ENCODE measurements at regions of chr15 and their contacts with region 1.

Region 1: DNA sequence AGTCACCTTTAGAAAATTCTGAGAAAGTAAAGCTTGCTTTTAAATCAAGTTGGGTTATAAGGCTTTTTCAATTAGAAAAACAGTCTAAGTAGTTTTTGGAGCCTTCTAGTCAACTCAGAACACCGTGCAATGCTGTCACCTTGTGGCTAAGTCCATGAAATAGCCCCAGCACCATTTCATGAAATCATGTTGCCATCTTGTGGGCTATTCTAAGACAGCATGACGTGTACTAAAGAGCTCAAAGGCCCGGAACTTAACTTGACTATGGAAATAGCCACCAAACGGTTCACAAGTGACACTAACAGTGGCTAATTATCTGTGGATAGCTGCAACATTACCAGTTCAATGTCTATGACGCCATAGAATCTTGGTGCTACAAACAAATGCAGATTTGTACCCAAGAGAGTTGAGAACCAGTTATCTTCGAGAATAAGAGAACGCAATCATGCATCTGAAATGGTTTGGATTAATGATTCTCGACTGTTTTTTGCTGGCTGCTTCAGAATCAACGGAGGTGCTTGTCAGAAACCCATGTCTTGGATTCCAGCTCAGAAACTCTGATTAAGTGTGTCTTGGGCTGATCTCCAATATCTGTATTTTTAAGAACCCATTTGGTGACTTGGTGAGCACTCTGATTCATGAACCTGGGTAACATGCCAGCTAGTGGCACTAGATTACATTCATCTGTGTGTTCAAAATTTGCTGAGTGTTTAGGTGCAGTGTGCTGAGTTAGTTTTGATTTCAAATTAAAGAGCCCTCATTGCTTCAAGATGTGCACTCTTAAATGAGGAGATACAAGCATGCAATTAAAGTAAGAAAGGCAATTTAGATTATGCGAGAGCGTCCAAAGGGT is 111.2 kb upstream of the MCTP2 start:
- DNase-seq: peak; percentile 68
- ATAC-seq: peak; percentile 100
- H3K4me3 Mint-ChIP-seq: no peak overlapping the region
- H3K27ac Mint-ChIP-seq: no peak overlapping the region
- H3K4me1 Mint-ChIP-seq: no peaks in the 10 kb centered on the region
- H3K27me3 Mint-ChIP-seq: no peaks in the 10 kb centered on the region

Region 2: GRCh38 chr15:92797168-92797951 is 1322.8 kb before region 1 on chr15:
- CTCF ChIA-PET with region 1: interaction called, 3 read pairs
- POLR2A ChIA-PET with region 1: no interaction called
- intact Hi-C with region 1: loop called in 1 of 2 experiments (anchors 10 kb)
- DNase-seq: no peak
- ATAC-seq: peak; percentile 90
- H3K4me3 Mint-ChIP-seq: no peak overlapping the region
- H3K27ac Mint-ChIP-seq: peak overlapping the region; percentile 65
- H3K4me1 Mint-ChIP-seq: peaks cover 8% of the 10 kb centered on the region
- H3K27me3 Mint-ChIP-seq: no peaks in the 10 kb centered on the region

Region 3: DNA sequence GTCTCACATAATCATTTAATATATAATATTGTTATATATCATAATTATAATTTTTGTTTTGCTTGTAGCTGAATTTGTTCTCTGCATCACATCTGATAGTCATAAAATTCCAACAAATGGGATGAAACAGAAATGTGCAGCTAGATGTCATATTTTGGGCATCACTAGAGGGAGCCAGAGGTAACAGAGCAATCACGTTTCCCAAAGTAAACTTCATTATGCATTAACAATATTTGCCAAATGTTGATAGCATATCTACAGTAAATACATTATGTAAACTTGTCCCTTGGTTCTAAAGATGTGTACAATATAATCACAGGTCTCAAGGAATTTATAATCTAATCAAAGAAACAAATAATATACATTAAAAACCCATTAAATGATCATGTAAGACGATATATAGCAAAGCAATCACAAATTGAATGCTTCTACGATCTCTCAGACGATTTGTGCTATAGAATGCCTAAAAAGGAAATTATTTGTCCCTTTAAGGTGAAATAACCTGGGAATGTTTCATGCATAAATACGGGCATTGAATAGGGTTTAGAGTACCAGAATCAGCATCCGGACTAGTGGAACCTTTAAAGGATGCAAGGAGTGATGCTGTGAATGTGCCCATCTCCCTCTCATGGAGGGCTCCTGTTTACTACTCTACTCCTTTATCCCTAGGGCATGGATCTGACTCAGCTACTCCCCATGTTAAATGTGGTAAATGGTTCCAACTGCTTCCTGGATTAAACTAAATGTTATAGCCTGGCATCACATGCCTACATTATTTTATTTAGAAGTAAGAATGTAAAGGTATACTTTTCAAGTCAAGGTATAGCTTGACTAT is 122.8 kb before region 1 on chr15:
- CTCF ChIA-PET with region 1: interaction called, 6 read pairs
- POLR2A ChIA-PET with region 1: no interaction called
- intact Hi-C with region 1: loop called (anchors 1 to 2 kb)
- DNase-seq: no peak
- ATAC-seq: no peak
- H3K4me3 Mint-ChIP-seq: no peak overlapping the region
- H3K27ac Mint-ChIP-seq: no peak overlapping the region
- H3K4me1 Mint-ChIP-seq: no peaks in the 10 kb centered on the region
- H3K27me3 Mint-ChIP-seq: no peaks in the 10 kb centered on the region

Region 4: DNA sequence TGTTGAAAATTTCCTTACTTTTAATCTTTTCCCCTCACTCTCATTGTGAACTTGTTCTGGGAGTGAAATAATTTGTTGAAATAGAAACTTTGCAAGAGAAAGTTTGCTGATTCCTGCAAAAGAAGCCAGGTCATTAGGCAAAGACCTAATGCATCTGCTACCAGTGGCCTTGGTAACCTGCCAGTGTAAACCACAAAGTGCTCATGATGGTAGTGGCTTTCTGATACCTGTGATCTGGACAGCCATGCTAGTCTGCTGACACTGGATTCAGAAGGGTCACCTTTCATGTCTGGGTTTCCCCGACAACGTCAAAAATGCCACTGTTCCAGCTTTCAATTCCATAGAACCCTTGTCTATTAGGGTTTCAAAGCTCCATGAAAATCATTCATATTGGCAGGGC is 12.5 kb before region 1 on chr15:
- CTCF ChIA-PET with region 1: interaction called, 10 read pairs
- POLR2A ChIA-PET with region 1: no interaction called
- intact Hi-C with region 1: no loop called
- DNase-seq: no peak
- ATAC-seq: no peak
- H3K4me3 Mint-ChIP-seq: no peak overlapping the region
- H3K27ac Mint-ChIP-seq: no peak overlapping the region
- H3K4me1 Mint-ChIP-seq: no peaks in the 10 kb centered on the region
- H3K27me3 Mint-ChIP-seq: peaks cover 21% of the 10 kb centered on the region

Measured in activated CD4-positive, alpha-beta T cell treated with anti-CD3 and anti-CD28 coated beads for 36 hours (primary cell).